ENCODE measurements at regions of chr11 and their contacts with region 1.

Region 1: DNA sequence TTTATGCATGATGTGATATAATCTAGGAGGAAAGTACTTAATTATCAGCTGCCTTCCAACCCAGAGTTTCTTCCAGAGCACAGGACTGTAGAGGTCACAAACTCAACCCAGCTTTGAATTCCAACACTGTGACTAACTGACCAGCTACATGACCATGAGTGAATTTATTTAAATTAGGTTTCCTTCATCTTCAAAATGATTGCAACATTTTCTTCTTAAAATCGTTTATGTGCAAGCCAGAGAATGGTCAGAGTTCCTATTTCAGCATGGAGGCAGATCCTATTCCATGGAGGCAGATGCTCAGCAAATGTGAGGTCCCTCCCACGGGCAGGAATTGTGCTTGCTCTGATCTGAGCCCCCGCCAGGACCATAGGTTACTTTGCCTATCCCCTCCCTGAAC is 42.3 kb downstream of the OSBP start:
- DNase-seq: no peak
- H3K4me3 ChIP-seq: no peak overlapping the region
- H3K27ac ChIP-seq: peak overlapping the region in 1 of 2 donors; percentile 40
- H3K4me1 ChIP-seq: no peaks in the 10 kb centered on the region
- H3K27me3 ChIP-seq: no peaks in the 10 kb centered on the region
- CTCF ChIP-seq: no peak
- POLR2A ChIP-seq: no peak

Region 2: DNA sequence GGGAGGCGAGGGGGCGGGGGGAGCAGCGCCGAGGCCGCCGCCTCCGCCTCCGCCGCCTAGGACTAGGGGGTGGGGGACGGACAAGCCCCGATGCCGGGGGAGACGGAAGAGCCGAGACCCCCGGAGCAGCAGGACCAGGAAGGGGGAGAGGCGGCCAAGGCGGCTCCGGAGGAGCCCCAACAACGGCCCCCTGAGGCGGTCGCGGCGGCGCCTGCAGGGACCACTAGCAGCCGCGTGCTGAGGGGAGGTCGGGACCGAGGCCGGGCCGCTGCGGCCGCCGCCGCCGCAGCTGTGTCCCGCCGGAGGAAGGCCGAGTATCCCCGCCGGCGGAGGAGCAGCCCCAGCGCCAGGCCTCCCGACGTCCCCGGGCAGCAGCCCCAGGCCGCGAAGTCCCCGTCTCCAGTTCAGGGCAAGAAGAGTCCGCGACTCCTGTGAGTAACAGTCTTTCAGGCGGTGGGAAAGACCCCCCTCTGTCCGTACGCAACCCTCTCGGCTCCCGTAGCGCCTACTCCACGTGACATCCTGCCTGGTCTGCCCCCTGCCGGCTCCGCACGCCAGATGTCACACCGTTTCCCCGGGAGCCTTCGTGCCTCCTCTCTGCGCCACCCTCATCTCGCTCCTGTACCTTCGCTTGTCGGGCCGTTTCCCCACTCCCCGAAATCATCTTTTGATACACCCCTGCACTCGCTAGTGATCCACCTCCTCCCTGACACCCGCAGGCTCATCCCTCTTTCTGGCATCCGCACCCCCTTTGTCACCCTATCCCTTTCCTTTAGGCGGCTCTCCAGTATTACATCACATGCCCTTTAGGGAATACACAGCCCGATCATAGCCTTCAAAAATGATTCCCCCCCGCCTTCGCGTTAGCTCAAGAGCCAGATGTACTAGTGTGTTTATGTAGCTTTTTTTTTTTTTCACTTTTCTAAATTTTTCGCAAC is 993.8 kb before region 1 on chr11:
- intact Hi-C with region 1: loop called (anchors 5 kb)
- DNase-seq: peak; percentile 89 to 91
- H3K4me3 ChIP-seq: peak overlapping the region; percentile 73 to 90 (median 90)
- H3K27ac ChIP-seq: peak overlapping the region; percentile 98 to 100
- H3K4me1 ChIP-seq: peaks cover 0 to 27% of the 10 kb centered on the region in 2 donors
- H3K27me3 ChIP-seq: no peaks in the 10 kb centered on the region
- CTCF ChIP-seq: peak; percentile 78 to 97 (median 80)
- POLR2A ChIP-seq: peak; percentile 78

Region 3: DNA sequence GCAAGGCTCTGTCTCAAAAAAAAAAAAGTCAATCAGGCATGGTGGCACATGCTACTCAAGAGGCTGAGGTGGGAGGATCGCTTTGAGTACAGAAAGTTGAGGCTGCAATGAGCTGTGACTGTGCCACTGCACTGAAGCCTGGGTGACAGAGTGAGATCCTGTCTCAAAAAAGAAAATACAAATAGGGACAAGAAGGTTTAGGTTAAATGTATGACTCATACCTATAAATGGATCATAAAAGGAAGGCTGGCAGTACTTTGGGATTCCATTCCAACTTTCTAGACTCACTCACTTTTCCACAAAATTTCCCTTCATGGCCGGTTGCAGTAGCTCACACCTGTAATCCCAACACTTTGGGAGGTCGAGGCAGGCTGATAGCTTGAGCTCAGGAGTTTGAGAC is 67.9 kb after region 1 on chr11:
- intact Hi-C with region 1: loop called (anchors 2 kb)
- DNase-seq: no peak
- H3K4me3 ChIP-seq: no peak overlapping the region
- H3K27ac ChIP-seq: no peak overlapping the region
- H3K4me1 ChIP-seq: no peaks in the 10 kb centered on the region
- H3K27me3 ChIP-seq: no peaks in the 10 kb centered on the region
- CTCF ChIP-seq: no peak
- POLR2A ChIP-seq: no peak

Measured in breast epithelium (tissue), 4 donors.